Endothelial cell of umbilical vein (primary cell): ENCODE measurements at regions of chr1 and their contacts with region 1.

Region 1: GRCh38 chr1:156677616-156678596 is 699 bp upstream of the NES start:
- DNase-seq: peak; percentile 83
- H3K4me3 ChIP-seq: peak overlapping the region; percentile 19 to 81 (median 50)
- H3K27ac ChIP-seq: peak overlapping the region; percentile 19
- H3K4me1 ChIP-seq: peaks cover 36% of the 10 kb centered on the region
- H3K27me3 ChIP-seq: peaks cover 2 to 5% of the 10 kb centered on the region in 2 experiments
- CTCF ChIP-seq: peak; percentile 91
- POLR2A ChIP-seq: no peak

Region 2: GRCh38 chr1:156551866-156552265 is 126.0 kb before region 1 on chr1:
- CTCF ChIA-PET with region 1: no interaction called
- POLR2A ChIA-PET with region 1: no interaction called
- dilution Hi-C with region 1: no loop called
- intact Hi-C with region 1: no loop called
- DNase-seq: no peak
- H3K4me3 ChIP-seq: no peak overlapping the region
- H3K27ac ChIP-seq: no peak overlapping the region
- H3K4me1 ChIP-seq: no peaks in the 10 kb centered on the region
- H3K27me3 ChIP-seq: no peaks in the 10 kb centered on the region
- CTCF ChIP-seq: no peak
- POLR2A ChIP-seq: no peak

Region 3: GRCh38 chr1:156618853-156619581 is 58.9 kb before region 1 on chr1 and contains the start of gene HAPLN2:
- CTCF ChIA-PET with region 1: interaction called, 100 read pairs
- POLR2A ChIA-PET with region 1: no interaction called
- dilution Hi-C with region 1: no loop called
- intact Hi-C with region 1: no loop called
- DNase-seq: peak; percentile 20
- H3K4me3 ChIP-seq: no peak within 1 kb of the TSS
- H3K27ac ChIP-seq: no peak within 1 kb of the TSS
- H3K4me1 ChIP-seq: peaks cover 8% of the 10 kb centered on the region
- H3K27me3 ChIP-seq: peaks cover 32 to 43% of the 10 kb centered on the region in 2 experiments
- CTCF ChIP-seq: peak; percentile 23 to 56
- POLR2A ChIP-seq: no peak
- total RNA-seq, gene HAPLN2: not detected in 2 replicates

Region 4: DNA sequence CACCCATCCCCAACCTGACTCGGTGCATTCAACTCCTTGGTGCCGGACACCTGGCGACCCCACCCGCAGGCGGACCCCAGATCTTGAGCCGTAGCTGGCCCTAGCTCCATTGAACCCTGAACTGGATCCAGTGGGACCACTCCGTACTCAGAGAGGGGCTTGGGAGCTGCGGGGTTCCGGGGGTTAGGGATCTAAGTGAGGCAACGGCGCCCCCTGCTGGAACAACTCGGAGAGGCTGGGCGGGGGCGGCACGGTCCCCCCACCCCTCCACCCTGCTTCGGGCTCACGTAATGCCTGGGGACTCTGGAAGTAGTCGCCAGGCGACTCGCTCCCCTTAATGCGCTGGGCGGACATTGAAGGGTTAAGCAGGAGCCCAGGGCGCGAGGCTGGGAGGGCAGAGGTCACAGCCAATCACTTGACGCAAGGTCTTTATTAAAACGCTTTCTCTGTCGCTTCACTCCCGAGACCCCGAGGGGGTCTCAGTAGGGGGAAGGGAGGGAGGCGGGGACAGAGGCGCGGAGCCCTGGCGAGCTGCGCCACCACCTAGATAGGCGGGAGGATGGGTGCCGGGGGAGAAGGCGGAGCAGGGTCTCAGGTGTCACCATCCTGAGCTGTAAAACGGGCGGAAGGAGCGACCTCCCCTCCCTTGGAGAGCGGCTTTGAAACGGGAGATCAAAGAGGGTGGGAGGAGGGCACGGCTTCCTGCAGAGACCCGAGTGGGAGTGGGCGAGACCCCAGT is 28.2 kb after region 1 on chr1:
- CTCF ChIA-PET with region 1: interaction called, 453 read pairs
- POLR2A ChIA-PET with region 1: no interaction called
- dilution Hi-C with region 1: no loop called
- intact Hi-C with region 1: no loop called
- DNase-seq: peak; percentile 57
- H3K4me3 ChIP-seq: peak overlapping the region in 1 of 3 experiments; percentile 4
- H3K27ac ChIP-seq: no peak overlapping the region
- H3K4me1 ChIP-seq: peaks cover 19% of the 10 kb centered on the region
- H3K27me3 ChIP-seq: peaks cover 0 to 3% of the 10 kb centered on the region in 2 experiments
- CTCF ChIP-seq: peak; percentile 76 to 87
- POLR2A ChIP-seq: no peak